ENCODE measurements at regions of chr12 and their contacts with region 1.

Region 1: GRCh38 chr12:47828608-47829536 is 9.2 kb upstream of the HDAC7 start:
- DNase-seq: no peak
- ATAC-seq: no peak
- H3K4me3 ChIP-seq: no peak overlapping the region
- H3K4me3 Mint-ChIP-seq: peak overlapping the region in 1 of 3 donors; percentile 60
- H3K27ac ChIP-seq: peak overlapping the region; percentile 22
- H3K27ac Mint-ChIP-seq: peak overlapping the region; percentile 82 to 87
- H3K4me1 ChIP-seq: peaks cover 81 to 95% of the 10 kb centered on the region in 2 experiments
- H3K4me1 Mint-ChIP-seq: peaks cover 90 to 92% (median 91%) of the 10 kb centered on the region in 3 donors
- H3K27me3 ChIP-seq: no peaks in the 10 kb centered on the region
- H3K27me3 Mint-ChIP-seq: no peaks in the 10 kb centered on the region

Region 2: DNA sequence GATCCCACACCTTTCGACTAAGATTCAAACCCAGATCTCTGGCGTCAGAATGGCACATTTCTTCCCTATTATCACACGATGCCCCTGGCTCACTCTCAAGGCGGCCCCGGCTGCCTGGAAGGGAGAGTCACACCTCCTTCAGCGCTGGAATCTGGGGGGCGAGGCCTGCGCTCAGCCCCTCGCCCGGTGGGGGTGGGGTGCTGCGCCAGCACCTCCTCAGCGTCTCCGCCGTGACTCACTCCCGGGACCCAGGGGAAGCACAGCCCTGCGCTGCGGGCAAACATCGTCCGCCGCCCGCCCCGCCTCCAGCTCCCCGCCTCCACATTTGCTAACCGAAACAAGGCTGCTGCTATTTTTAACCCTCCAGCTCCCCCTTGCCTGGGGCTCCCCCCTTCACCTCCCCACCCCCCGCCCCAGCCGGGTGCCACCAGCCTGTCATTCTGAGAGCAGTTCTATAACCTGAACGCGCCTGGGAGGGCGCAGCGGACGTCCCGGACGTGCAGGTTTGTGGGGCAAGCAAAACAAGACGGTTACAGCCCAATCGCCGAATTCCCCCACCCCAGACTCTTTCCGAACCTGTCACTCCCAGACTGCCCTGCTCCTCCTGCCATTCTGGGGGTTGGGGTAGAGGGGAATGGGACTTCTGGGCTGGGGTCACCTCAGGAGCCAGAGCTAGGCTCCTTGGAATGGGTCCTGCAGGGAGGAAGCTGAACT is 15.9 kb before region 1 on chr12:
- CTCF ChIA-PET with region 1: interaction called, 7 to 21 read pairs
- POLR2A ChIA-PET with region 1: interaction called, 3 to 4 read pairs
- DNase-seq: peak; percentile 77 to 94 (median 89)
- ATAC-seq: peak; percentile 77 to 79 (median 79)
- H3K4me3 ChIP-seq: peak overlapping the region; percentile 59 to 70
- H3K4me3 Mint-ChIP-seq: peak overlapping the region; percentile 73 to 97 (median 80)
- H3K27ac ChIP-seq: peak overlapping the region; percentile 95
- H3K27ac Mint-ChIP-seq: peak overlapping the region; percentile 90 to 99
- H3K4me1 ChIP-seq: peaks cover 71 to 99% of the 10 kb centered on the region in 2 experiments
- H3K4me1 Mint-ChIP-seq: peaks cover 91 to 97% (median 96%) of the 10 kb centered on the region in 3 donors
- H3K27me3 ChIP-seq: no peaks in the 10 kb centered on the region
- H3K27me3 Mint-ChIP-seq: no peaks in the 10 kb centered on the region

Measured in T-cell (primary cell).